Breast epithelium (tissue), 4 donors: ENCODE measurements at regions of chr3 and their contacts with region 1.

Region 1: DNA sequence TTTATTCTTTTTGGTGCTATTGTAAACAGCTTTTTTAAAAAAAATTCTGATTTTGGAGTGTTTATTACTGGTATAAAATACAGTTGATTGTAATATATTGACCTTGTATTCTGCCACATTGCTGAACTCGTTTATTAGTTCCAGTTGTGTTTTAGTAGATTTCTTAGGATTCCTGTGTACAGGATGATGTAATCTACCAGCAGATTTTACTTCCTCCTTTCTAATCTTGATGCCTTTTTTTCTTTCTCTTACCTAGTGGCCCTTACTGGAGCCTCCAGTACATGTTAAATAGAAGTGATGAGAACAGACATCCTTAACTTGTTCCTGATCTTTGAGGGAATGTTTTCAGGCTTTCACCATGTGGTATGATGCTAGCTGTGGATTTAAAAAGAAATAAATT is 70.4 kb upstream of the KY start:
- DNase-seq: no peak
- H3K4me3 ChIP-seq: no peak overlapping the region
- H3K27ac ChIP-seq: no peak overlapping the region
- H3K4me1 ChIP-seq: no peaks in the 10 kb centered on the region
- H3K27me3 ChIP-seq: no peaks in the 10 kb centered on the region
- CTCF ChIP-seq: no peak
- POLR2A ChIP-seq: no peak

Region 2: GRCh38 chr3:134212906-134213665 is 508.1 kb before region 1 on chr3:
- intact Hi-C with region 1: no loop called
- DNase-seq: peak; percentile 76 to 89
- H3K4me3 ChIP-seq: no peak overlapping the region
- H3K27ac ChIP-seq: peak overlapping the region in 1 of 2 donors; percentile 42
- H3K4me1 ChIP-seq: no peaks in the 10 kb centered on the region
- H3K27me3 ChIP-seq: no peaks in the 10 kb centered on the region
- CTCF ChIP-seq: peak; percentile 91 to 95 (median 94)
- POLR2A ChIP-seq: no peak

Region 3: GRCh38 chr3:134737516-134737915 is 16.3 kb after region 1 on chr3:
- intact Hi-C with region 1: loop called (anchors 1 kb)
- DNase-seq: no peak
- H3K4me3 ChIP-seq: no peak overlapping the region
- H3K27ac ChIP-seq: no peak overlapping the region
- H3K4me1 ChIP-seq: no peaks in the 10 kb centered on the region
- H3K27me3 ChIP-seq: no peaks in the 10 kb centered on the region
- CTCF ChIP-seq: no peak
- POLR2A ChIP-seq: no peak

Region 4: DNA sequence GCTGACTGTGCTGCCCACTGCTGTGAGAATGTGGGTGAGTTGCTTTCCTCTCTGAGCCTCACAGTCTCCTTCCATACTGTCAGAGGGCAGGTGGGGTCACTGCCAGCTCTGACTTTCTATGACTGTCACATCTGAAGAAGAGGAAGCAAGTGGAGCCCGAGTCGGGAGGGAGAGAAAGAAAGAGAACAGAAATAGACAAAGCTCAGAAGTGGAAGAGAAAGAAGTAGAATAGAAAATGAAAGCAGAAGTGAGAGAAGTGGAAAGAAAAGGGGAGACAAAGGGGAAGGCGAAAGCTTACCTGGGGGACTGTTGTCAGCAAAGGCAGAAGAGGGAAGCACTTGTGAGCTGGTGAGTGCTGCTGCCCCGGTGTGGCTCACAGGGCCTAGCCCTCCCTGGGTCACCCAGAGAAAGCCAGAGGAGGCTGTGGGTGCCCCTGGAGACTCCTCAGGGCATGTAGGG is 131.7 kb after region 1 on chr3:
- intact Hi-C with region 1: no loop called
- DNase-seq: no peak
- H3K4me3 ChIP-seq: no peak overlapping the region
- H3K27ac ChIP-seq: no peak overlapping the region
- H3K4me1 ChIP-seq: no peaks in the 10 kb centered on the region
- H3K27me3 ChIP-seq: no peaks in the 10 kb centered on the region
- CTCF ChIP-seq: no peak
- POLR2A ChIP-seq: no peak